GM18951 (cell line): ENCODE measurements at regions of chr1 and their contacts with region 1.

Region 1: GRCh38 chr1:33633019-33633801 is 160.8 kb downstream of the ZSCAN20 start:
- POLR2A ChIP-seq: no peak

Region 2: DNA sequence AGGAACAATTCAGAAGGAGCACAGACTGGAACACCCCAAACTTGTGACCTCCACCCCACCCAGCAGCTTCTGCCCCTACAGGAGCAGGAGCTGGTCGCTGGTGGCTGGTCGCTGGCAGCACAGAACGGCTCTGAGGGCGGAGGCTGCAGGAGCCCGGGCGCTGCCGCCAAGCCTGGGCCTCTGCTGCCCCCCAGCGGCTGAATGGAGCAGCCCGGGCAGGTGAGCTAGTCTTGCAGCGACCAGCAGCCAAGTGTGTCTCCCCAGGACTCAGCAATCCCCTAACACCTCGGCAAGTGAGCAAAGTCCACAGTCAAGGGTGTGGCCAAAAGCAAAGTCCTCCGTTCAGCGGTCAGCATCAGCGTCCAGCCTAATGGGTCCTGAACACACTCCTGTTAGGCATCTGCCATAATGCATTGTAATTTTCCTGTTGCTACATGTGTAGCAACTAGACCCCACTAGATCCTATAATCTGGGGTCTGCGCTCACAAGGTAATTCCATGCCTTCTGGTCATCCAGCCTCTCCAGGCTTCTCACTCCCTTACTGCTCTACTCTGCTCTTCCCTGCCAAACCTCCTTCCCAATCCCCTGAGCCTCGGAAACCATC is 1109.6 kb after region 1 on chr1:
- in situ Hi-C with region 1: loop called (anchors 25 kb)
- POLR2A ChIP-seq: no peak